HCT116 (cell line): ENCODE measurements at regions of chr12 and their contacts with region 1.

Region 1: GRCh38 chr12:109110988-109111495 is 5.3 kb upstream of the ACACB start:
- DNase-seq: no peak
- ATAC-seq: peak; percentile 15; the same call in 1 of the 2 replicates
- H3K4me3 ChIP-seq: no peak overlapping the region
- H3K27ac ChIP-seq: no peak overlapping the region
- H3K4me1 ChIP-seq: no peaks in the 10 kb centered on the region
- H3K27me3 ChIP-seq: no peaks in the 10 kb centered on the region
- CTCF ChIP-seq: no peak
- POLR2A ChIP-seq: no peak
- RAD21 ChIP-seq: no peak

Region 2: GRCh38 chr12:109121346-109121880 is 10.4 kb after region 1 on chr12:
- CTCF ChIA-PET with region 1: interaction called, 15 read pairs
- POLR2A ChIA-PET with region 1: no interaction called
- RAD21 ChIA-PET with region 1: no interaction called
- intact Hi-C with region 1: no loop called
- DNase-seq: no peak
- ATAC-seq: no peak
- H3K4me3 ChIP-seq: no peak overlapping the region
- H3K27ac ChIP-seq: no peak overlapping the region
- H3K4me1 ChIP-seq: no peaks in the 10 kb centered on the region
- H3K27me3 ChIP-seq: no peaks in the 10 kb centered on the region
- CTCF ChIP-seq: no peak
- POLR2A ChIP-seq: no peak
- RAD21 ChIP-seq: no peak

Region 3: GRCh38 chr12:109393437-109394345 is 282.6 kb after region 1 on chr12:
- CTCF ChIA-PET with region 1: interaction called, 12 read pairs
- POLR2A ChIA-PET with region 1: no interaction called
- RAD21 ChIA-PET with region 1: no interaction called
- intact Hi-C with region 1: no loop called
- DNase-seq: peak; percentile 48
- ATAC-seq: peak; percentile 89
- H3K4me3 ChIP-seq: no peak overlapping the region
- H3K27ac ChIP-seq: no peak overlapping the region
- H3K4me1 ChIP-seq: no peaks in the 10 kb centered on the region
- H3K27me3 ChIP-seq: no peaks in the 10 kb centered on the region
- CTCF ChIP-seq: peak; percentile 61 to 97 (median 95); a peak in 5 of 6 replicates
- POLR2A ChIP-seq: no peak
- RAD21 ChIP-seq: peak; percentile 66